ENCODE measurements at regions of chr22 and their contacts with region 1.

Region 1: DNA sequence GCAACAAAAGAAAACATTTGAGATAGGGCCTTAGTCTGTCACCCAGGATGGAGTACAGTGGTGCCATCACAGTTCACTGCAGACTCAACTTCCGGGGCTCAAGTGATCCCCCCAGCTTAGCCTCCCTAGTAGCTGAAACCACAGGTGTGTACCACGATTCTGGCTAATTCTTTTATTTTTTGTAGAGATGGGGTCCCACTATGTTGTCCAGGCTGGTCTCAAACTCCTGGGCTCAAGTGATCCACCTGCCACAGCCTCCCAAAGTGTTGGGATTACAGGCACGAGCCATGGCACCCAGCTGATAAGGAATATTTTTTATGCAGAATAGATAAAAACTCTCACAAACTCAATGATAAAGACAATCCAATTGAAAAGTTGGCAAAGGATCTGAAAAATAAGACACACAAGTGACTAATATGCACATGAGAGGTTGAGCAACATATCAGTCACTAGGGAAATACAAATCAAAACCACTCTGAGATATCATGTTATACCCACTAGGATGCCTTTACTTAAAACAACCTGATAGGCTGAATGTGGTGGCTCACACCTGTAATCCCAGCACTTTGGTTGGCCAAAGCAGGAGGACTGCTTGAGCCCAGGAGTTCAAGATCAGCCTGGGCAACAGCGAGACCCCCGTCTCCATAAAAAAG is 33.9 kb upstream of the CLTCL1 start:
- DNase-seq: no peak
- ATAC-seq: peak; percentile 30 to 67 (median 50)
- H3K4me3 ChIP-seq: no peak overlapping the region
- H3K27ac ChIP-seq: no peak overlapping the region
- H3K4me1 ChIP-seq: no peaks in the 10 kb centered on the region
- H3K27me3 ChIP-seq: no peaks in the 10 kb centered on the region
- CTCF ChIP-seq: no peak

Region 2: DNA sequence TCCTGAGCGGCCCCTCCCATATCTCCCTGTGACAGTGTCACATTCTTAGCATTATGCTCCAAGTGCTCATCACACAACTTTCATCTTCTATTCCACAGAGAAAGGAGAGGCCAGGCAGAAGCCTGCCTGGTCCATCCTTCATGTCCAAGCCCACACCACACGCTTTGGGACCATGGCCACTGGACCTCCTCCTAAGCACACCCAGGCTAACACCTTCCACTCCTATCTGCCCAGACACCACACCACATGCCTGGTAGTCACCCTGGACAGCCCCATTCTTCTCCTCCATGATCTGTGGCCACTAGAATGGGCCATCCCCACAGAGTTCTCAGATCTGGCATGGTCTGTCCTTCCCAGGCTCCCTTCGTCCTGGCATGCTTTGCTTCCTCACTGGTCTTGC is 50.8 kb after region 1 on chr22:
- intact Hi-C with region 1: loop called in 1 of 2 experiments (anchors 10 kb)
- DNase-seq: no peak
- ATAC-seq: no peak
- H3K4me3 ChIP-seq: no peak overlapping the region
- H3K27ac ChIP-seq: no peak overlapping the region
- H3K4me1 ChIP-seq: no peaks in the 10 kb centered on the region
- H3K27me3 ChIP-seq: no peaks in the 10 kb centered on the region
- CTCF ChIP-seq: no peak